MCF 10A (cell line): ENCODE measurements at regions of chrX and their contacts with region 1.

Region 1: GRCh38 chrX:56978172-56978571 is 17.2 kb downstream of the SPIN3 start:
- DNase-seq: peak; percentile 71
- H3K4me3 Mint-ChIP-seq: no peak overlapping the region
- H3K27ac Mint-ChIP-seq: no peak overlapping the region
- H3K4me1 Mint-ChIP-seq: no peaks in the 10 kb centered on the region
- H3K27me3 Mint-ChIP-seq: peaks cover 63% of the 10 kb centered on the region
- CTCF ChIP-seq: peak; percentile 59

Region 2: GRCh38 chrX:56530011-56530410 is 448.2 kb before region 1 on chrX:
- CTCF ChIA-PET with region 1: no interaction called
- POLR2A ChIA-PET with region 1: no interaction called
- intact Hi-C with region 1: no loop called
- DNase-seq: no peak
- H3K4me3 Mint-ChIP-seq: no peak overlapping the region
- H3K27ac Mint-ChIP-seq: no peak overlapping the region
- H3K4me1 Mint-ChIP-seq: no peaks in the 10 kb centered on the region
- H3K27me3 Mint-ChIP-seq: peaks cover 50% of the 10 kb centered on the region
- CTCF ChIP-seq: no peak

Region 3: DNA sequence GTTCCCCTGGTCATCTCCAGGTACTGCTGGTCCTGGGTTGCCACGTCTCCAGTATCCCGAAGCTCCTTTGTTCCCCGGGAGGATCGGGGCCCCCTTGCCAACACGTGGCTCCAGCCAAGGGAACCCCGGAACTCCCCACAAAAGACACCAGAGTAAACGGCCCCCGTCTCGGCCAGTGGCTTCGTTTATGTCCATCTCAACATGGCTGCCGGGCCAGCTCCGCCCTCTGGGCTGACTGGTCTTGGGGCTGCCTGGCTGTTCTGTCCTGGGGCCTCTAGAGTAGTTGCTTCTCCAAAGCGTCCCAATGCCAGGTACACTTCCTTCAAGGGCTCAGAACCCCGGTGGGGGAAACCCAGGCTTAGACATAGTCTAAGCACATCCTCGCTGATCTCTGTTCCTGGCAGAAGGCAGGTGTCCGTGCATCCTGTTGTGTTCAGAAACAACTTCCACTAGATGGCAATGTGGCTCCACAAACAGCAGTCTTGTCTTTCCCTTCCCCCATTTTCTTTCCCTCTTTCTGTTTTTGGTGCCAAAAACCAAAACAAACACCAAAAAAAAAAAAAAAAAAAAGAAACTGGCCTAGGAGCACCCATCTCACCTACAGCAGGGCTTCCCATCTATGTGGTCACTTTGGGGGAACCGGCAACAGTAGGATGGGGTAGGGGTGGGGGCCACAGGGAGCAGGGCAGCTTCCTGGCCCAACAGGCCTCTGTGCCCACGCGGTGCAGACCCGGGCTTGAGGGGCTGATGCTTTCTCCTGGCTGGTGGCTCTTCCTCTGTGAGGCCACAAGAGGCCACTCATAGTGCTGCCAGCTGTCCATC is 213.8 kb before region 1 on chrX:
- CTCF ChIA-PET with region 1: interaction called, 14 read pairs
- POLR2A ChIA-PET with region 1: interaction called, 4 read pairs
- intact Hi-C with region 1: no loop called
- DNase-seq: peak; percentile 88
- H3K4me3 Mint-ChIP-seq: peak overlapping the region; percentile 83
- H3K27ac Mint-ChIP-seq: peak overlapping the region; percentile 92
- H3K4me1 Mint-ChIP-seq: peaks cover 34% of the 10 kb centered on the region
- H3K27me3 Mint-ChIP-seq: peaks cover 36% of the 10 kb centered on the region
- CTCF ChIP-seq: peak; percentile 71

Region 4: DNA sequence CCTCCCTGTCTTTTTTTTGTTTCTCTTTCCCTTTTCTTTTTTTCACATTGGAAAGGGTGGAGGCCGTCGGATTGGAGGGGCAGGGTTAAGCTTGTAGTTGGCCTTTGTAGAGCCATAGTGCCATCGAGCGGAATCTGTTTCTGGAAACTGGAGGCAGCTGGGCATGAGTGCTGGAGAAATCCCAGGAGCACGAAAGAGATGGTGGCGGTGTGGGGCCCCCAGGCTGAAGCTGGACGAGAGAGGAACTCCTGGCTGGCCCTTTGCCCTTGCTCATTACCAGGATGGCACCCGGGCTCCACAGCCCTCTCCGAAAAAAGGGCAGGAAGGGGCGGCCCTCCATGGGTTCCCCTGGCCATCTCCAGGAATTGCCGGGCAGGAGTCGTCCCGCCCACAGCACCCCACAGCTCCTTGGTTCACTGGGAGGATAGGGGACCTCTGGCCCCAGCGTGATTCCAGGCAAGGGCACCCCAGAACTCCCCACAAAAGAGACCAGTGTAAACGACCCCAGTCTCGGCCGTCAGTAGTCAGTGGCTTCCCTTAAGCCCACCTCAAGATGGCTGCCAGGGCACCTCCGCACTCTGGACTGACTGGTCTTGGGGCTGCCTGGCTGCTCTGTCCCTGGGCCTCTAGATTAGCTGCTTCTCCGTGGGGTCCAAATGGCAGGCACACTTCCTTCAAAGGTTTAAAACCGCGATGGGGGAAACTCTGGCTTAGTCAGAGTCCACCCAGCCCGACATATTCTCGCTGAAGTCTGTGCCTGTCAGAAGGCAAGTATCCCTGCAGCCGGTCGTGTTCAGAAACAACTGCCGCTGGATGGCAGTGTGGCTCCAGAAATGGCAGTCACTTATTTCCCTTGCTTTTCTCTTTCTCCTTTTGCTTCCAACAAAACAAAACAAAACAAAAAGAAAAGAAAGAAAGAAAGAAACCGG is 175.0 kb before region 1 on chrX:
- CTCF ChIA-PET with region 1: interaction called, 69 read pairs
- POLR2A ChIA-PET with region 1: interaction called, 7 read pairs
- intact Hi-C with region 1: loop called (anchors 1 kb)
- DNase-seq: peak; percentile 77
- H3K4me3 Mint-ChIP-seq: peak overlapping the region; percentile 78
- H3K27ac Mint-ChIP-seq: no peak overlapping the region
- H3K4me1 Mint-ChIP-seq: peaks cover 13% of the 10 kb centered on the region
- H3K27me3 Mint-ChIP-seq: peaks cover 36% of the 10 kb centered on the region
- CTCF ChIP-seq: peak; percentile 70

Region 5: DNA sequence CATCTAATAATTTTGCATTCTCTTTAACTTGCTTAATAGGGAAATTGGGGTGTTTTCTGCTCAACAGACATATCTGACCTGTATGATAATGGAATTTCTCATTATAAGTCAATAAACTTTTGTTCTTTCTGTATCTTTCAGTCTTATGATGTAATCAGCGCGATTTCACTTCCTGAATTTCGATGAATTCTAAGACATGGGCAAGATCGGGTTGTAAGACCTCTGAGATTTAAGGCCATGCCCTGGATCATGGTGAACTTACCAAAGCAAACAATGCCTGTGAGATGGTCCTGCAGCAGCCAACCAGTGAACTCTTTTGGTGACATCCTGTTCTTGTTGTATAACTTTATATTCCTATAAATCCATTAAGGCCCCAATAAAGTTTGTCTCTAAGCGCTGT is 161.0 kb before region 1 on chrX:
- CTCF ChIA-PET with region 1: interaction called, 8 read pairs
- POLR2A ChIA-PET with region 1: no interaction called
- intact Hi-C with region 1: loop called (anchors 5 kb)
- DNase-seq: no peak
- H3K4me3 Mint-ChIP-seq: no peak overlapping the region
- H3K27ac Mint-ChIP-seq: no peak overlapping the region
- H3K4me1 Mint-ChIP-seq: peaks cover 18% of the 10 kb centered on the region
- H3K27me3 Mint-ChIP-seq: peaks cover 18% of the 10 kb centered on the region
- CTCF ChIP-seq: no peak

Region 6: DNA sequence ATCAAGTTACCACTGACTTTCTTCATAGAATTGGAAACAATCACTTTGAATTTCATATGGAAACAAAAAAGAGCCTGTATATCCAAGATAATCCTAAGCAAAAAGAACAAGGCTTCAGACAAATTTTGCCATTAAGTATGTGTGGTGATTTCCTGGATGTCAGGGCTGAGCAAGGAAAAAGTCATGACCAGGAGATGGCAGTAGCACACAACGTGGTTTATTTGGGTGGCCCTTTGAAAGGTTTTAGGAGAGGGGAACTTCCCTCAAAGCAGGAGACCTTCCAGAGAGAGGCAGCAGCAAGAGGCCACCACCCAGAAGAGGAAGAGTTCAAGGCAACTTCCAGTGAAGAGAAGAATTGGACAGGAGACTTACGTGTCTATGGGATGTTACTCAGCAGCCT is 595.6 kb after region 1 on chrX:
- CTCF ChIA-PET with region 1: no interaction called
- POLR2A ChIA-PET with region 1: no interaction called
- intact Hi-C with region 1: no loop called
- DNase-seq: peak; percentile 38
- H3K4me3 Mint-ChIP-seq: no peak overlapping the region
- H3K27ac Mint-ChIP-seq: no peak overlapping the region
- H3K4me1 Mint-ChIP-seq: no peaks in the 10 kb centered on the region
- H3K27me3 Mint-ChIP-seq: no peaks in the 10 kb centered on the region
- CTCF ChIP-seq: peak; percentile 45